ENCODE measurements at regions of chr12 and their contacts with region 1.

Region 1: DNA sequence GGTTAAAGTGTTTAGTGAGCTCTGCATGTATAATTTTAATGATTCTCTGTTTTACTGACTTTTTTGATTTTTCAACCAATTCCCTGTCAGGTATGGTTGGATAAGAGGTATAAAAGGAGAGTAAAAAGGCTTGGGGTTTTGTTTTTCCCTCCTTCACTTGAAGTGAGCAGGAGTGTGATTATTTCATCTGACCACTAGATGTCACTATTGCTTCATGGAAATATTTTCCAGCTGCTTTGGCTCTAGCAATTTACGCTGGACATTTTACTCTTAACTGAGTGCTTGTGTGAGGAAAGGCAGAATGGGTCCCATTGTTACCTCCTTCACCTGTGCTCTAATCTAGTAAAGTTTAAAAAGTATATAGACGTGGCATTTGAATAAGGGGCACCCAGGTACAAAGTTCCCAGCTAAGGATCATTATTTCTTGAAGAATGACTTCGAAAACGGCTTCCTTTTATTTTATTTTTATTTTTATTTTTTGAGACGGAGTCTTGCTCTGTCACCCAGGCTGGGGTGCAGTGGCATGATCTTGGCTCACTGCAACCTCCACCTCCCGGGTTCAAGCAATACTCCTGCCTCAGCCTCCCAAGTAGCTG is 66.5 kb downstream of the TBC1D30 start:
- DNase-seq: peak; percentile 70
- ATAC-seq: peak; percentile 67
- H3K4me3 ChIP-seq: no peak overlapping the region
- H3K27ac ChIP-seq: no peak overlapping the region
- H3K4me1 ChIP-seq: peaks cover 5% of the 10 kb centered on the region; the same call in 1 of the 2 replicates
- H3K27me3 ChIP-seq: peaks cover 14% of the 10 kb centered on the region; the same call in 1 of the 2 replicates
- CTCF ChIP-seq: peak; percentile 85
- POLR2A ChIP-seq: no peak
- RAD21 ChIP-seq: peak; percentile 92

Region 2: GRCh38 chr12:65067383-65067782 is 176.4 kb after region 1 on chr12:
- CTCF ChIA-PET with region 1: no interaction called
- POLR2A ChIA-PET with region 1: no interaction called
- dilution Hi-C with region 1: no loop called
- in situ Hi-C with region 1: no loop called
- intact Hi-C with region 1: no loop called
- DNase-seq: no peak
- ATAC-seq: no peak
- H3K4me3 ChIP-seq: no peak overlapping the region
- H3K27ac ChIP-seq: no peak overlapping the region
- H3K4me1 ChIP-seq: no peaks in the 10 kb centered on the region
- H3K27me3 ChIP-seq: peaks cover 2% of the 10 kb centered on the region; the same call in 1 of the 2 replicates
- CTCF ChIP-seq: no peak
- POLR2A ChIP-seq: no peak
- RAD21 ChIP-seq: no peak

Region 3: GRCh38 chr12:65106948-65107347 is 216.0 kb after region 1 on chr12:
- CTCF ChIA-PET with region 1: interaction called, 5 read pairs
- POLR2A ChIA-PET with region 1: no interaction called
- dilution Hi-C with region 1: no loop called
- in situ Hi-C with region 1: loop called (anchors 10 kb)
- intact Hi-C with region 1: loop called (anchors 1 kb)
- DNase-seq: peak; percentile 3
- ATAC-seq: no peak
- H3K4me3 ChIP-seq: no peak overlapping the region
- H3K27ac ChIP-seq: no peak overlapping the region
- H3K4me1 ChIP-seq: no peaks in the 10 kb centered on the region
- H3K27me3 ChIP-seq: peaks cover 20% of the 10 kb centered on the region
- CTCF ChIP-seq: peak; percentile 40
- POLR2A ChIP-seq: no peak
- RAD21 ChIP-seq: peak; percentile 28; the same call in 1 of the 2 replicates

Region 4: GRCh38 chr12:65232476-65233077 is 341.6 kb after region 1 on chr12:
- CTCF ChIA-PET with region 1: interaction called, 3 read pairs
- POLR2A ChIA-PET with region 1: no interaction called
- dilution Hi-C with region 1: no loop called
- in situ Hi-C with region 1: loop called (anchors 25 kb)
- intact Hi-C with region 1: loop called (anchors 2 kb)
- DNase-seq: peak; percentile 38
- ATAC-seq: peak; percentile 65
- H3K4me3 ChIP-seq: no peak overlapping the region
- H3K27ac ChIP-seq: no peak overlapping the region
- H3K4me1 ChIP-seq: no peaks in the 10 kb centered on the region
- H3K27me3 ChIP-seq: no peaks in the 10 kb centered on the region
- CTCF ChIP-seq: peak; percentile 47
- POLR2A ChIP-seq: no peak
- RAD21 ChIP-seq: peak; percentile 36

Region 5: GRCh38 chr12:65728848-65729793 is 838.1 kb after region 1 on chr12:
- CTCF ChIA-PET with region 1: no interaction called
- POLR2A ChIA-PET with region 1: no interaction called
- dilution Hi-C with region 1: no loop called
- in situ Hi-C with region 1: no loop called
- intact Hi-C with region 1: loop called (anchors 10 kb)
- DNase-seq: peak; percentile 5
- ATAC-seq: peak; percentile 78
- H3K4me3 ChIP-seq: peak overlapping the region; percentile 53
- H3K27ac ChIP-seq: no peak overlapping the region; the same call in 1 of the 2 replicates
- H3K4me1 ChIP-seq: no peaks in the 10 kb centered on the region
- H3K27me3 ChIP-seq: peaks cover 13% of the 10 kb centered on the region
- CTCF ChIP-seq: no peak
- POLR2A ChIP-seq: no peak
- RAD21 ChIP-seq: no peak

Region 6: DNA sequence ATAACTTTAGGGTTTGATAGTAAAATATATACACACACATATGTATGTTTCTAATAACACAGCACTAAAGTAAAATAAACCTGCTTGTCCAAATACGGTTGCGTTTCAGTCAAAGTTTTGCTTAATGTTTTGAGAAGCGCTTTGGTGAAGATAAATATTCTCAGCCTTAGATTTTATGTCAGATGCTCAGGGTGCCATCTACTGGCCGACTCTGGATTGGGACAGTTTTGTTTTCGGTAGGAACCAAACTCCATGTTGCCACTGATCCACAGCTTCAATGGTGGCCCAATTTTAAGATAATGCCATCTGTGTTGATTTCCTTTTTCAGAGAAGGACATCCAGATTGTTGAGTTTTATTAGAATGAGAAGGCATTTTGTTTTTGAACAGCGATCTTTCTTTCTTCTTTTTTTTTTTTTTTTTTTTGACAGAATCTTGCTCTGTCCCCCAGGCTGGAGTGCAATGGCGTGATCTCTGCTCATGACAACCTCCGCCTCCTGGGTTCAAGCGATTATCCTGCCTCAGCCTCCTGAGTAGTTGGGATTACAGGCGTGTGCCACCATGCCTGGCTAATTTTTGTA is 1196.5 kb after region 1 on chr12:
- CTCF ChIA-PET with region 1: no interaction called
- POLR2A ChIA-PET with region 1: no interaction called
- dilution Hi-C with region 1: no loop called
- in situ Hi-C with region 1: no loop called
- intact Hi-C with region 1: loop called (anchors 1 kb)
- DNase-seq: peak; percentile 88
- ATAC-seq: peak; percentile 93
- H3K4me3 ChIP-seq: no peak overlapping the region
- H3K27ac ChIP-seq: no peak overlapping the region
- H3K4me1 ChIP-seq: peaks cover 4% of the 10 kb centered on the region
- H3K27me3 ChIP-seq: no peaks in the 10 kb centered on the region
- CTCF ChIP-seq: peak; percentile 89
- POLR2A ChIP-seq: peak; percentile 30; the same call in 1 of the 2 replicates
- RAD21 ChIP-seq: peak; percentile 91

Region 7: GRCh38 chr12:66409195-66409871 is 1518.4 kb after region 1 on chr12:
- CTCF ChIA-PET with region 1: no interaction called
- POLR2A ChIA-PET with region 1: no interaction called
- dilution Hi-C with region 1: no loop called
- in situ Hi-C with region 1: no loop called
- intact Hi-C with region 1: loop called (anchors 5 kb)
- DNase-seq: peak; percentile 80
- ATAC-seq: peak; percentile 85
- H3K4me3 ChIP-seq: no peak overlapping the region
- H3K27ac ChIP-seq: no peak overlapping the region
- H3K4me1 ChIP-seq: peaks cover 8% of the 10 kb centered on the region
- H3K27me3 ChIP-seq: no peaks in the 10 kb centered on the region; the same call in none of the 2 replicates
- CTCF ChIP-seq: peak; percentile 81
- POLR2A ChIP-seq: no peak
- RAD21 ChIP-seq: peak; percentile 92

Region 8: GRCh38 chr12:66860752-66861750 is 1970.1 kb after region 1 on chr12:
- CTCF ChIA-PET with region 1: no interaction called
- POLR2A ChIA-PET with region 1: no interaction called
- dilution Hi-C with region 1: no loop called
- in situ Hi-C with region 1: no loop called
- intact Hi-C with region 1: loop called (anchors 5 kb)
- DNase-seq: peak; percentile 53
- ATAC-seq: peak; percentile 84
- H3K4me3 ChIP-seq: no peak overlapping the region
- H3K27ac ChIP-seq: no peak overlapping the region
- H3K4me1 ChIP-seq: no peaks in the 10 kb centered on the region
- H3K27me3 ChIP-seq: no peaks in the 10 kb centered on the region
- CTCF ChIP-seq: peak; percentile 90
- POLR2A ChIP-seq: no peak
- RAD21 ChIP-seq: peak; percentile 51

Measured in IMR-90 (cell line).